ENCODE measurements at regions of chr2 and their contacts with region 1.

Region 1: GRCh38 chr2:16608661-16609643 is 56.7 kb downstream of the CYRIA start:
- DNase-seq: peak; percentile 60 to 99
- H3K4me3 ChIP-seq: peak overlapping the region; percentile 38 to 78 (median 66); a peak in 7 of 8 replicates
- H3K27ac ChIP-seq: no peak overlapping the region
- H3K4me1 ChIP-seq: no peaks in the 10 kb centered on the region; a peak in 1 of 7 replicates
- H3K27me3 ChIP-seq: no peaks in the 10 kb centered on the region
- CTCF ChIP-seq: peak; percentile 91 to 93 (median 91)
- EP300 ChIP-seq: no peak
- POLR2A ChIP-seq: no peak; a peak in 1 of 3 replicates
- RAD21 ChIP-seq: peak; percentile 93 to 95

Region 2: DNA sequence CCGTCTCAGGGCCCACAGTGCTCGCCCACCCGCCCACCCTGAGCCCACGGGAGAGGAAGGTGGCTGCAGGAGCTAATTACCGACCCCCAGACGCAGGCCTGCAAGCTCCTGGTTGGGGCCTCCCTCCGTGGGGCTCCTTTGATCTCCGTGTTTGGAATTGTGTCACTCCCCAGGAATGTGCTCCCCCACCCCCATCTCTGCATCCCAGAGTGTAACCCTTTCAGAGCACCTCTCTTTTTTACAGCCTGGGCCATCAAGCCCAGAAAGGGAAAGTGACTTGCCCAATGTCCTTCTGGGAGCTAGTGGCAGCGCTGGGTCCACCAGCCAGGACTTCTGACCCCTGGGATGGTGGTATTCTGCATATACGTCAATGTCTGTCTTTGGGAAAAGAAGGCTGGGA is 278.4 kb before region 1 on chr2:
- CTCF ChIA-PET with region 1: no interaction called
- POLR2A ChIA-PET with region 1: no interaction called
- DNase-seq: peak in 1 of 2 experiments; percentile 63
- H3K4me3 ChIP-seq: peak overlapping the region in 1 of 4 experiments; percentile 9; a peak in 2 of 8 replicates
- H3K27ac ChIP-seq: no peak overlapping the region
- H3K4me1 ChIP-seq: peaks cover 9 to 16% (median 13%) of the 10 kb centered on the region in 4 experiments
- H3K27me3 ChIP-seq: peaks cover 0 to 4% (median 1%) of the 10 kb centered on the region in 4 experiments; a peak in 1 of 7 replicates
- CTCF ChIP-seq: no peak
- EP300 ChIP-seq: no peak; a peak in 1 of 3 replicates
- POLR2A ChIP-seq: no peak
- RAD21 ChIP-seq: no peak

Region 3: DNA sequence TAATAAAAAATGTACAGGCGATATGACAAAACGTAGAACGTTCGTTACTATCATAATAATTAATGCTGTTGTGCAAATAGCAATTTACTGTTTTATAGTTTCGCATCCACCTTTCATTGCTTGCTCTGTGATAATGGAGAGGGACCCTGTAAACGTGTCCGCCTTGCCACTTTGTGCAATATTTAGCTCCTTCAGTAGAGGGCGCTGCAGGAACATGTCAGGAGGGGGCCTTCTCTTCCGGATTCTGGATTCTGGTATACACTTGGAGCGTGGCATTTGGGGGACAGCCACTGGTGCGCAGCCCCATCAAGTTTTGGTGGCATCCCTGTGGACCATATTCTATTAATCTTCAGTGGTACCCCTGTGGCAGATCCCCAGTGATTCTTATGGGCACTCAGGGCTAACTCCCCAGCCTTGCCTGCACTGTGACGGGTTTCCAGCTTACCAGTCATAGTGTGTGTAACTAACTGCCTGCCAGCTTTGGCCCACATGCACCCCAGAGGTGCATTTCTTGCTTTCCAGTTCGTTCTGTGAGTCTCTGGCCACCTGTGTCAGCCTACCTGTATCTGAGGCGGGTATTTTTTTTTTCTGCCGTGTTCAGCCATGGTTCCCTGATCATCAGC is 83.6 kb before region 1 on chr2:
- CTCF ChIA-PET with region 1: interaction called, 44 read pairs
- POLR2A ChIA-PET with region 1: no interaction called
- DNase-seq: peak in 1 of 2 experiments; percentile 89
- H3K4me3 ChIP-seq: no peak overlapping the region
- H3K27ac ChIP-seq: no peak overlapping the region
- H3K4me1 ChIP-seq: peaks cover 0 to 4% (median 0%) of the 10 kb centered on the region in 4 experiments; a peak in 2 of 7 replicates
- H3K27me3 ChIP-seq: no peaks in the 10 kb centered on the region
- CTCF ChIP-seq: peak; percentile 73 to 87 (median 86)
- EP300 ChIP-seq: no peak
- POLR2A ChIP-seq: no peak
- RAD21 ChIP-seq: peak; percentile 89 to 91

Region 4: DNA sequence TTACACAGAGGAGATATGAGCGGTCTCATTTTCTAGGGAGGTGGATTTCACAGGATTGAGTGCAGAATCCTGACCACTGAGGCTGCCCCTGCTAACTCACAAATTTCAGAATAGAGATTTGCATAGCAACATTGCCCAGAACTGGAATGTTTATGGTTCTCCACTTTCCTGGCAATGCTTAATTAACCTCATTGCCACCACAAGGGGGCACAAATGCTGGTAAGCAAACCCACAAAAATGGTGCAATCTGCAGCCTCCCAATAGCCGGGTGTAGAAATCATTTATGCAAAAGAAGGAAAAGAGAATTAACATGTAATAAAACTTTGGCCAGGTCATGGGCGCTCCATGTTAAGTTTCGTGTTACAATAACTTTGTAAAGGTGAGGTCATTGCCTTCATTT is 55.7 kb before region 1 on chr2:
- CTCF ChIA-PET with region 1: interaction called, 91 read pairs
- POLR2A ChIA-PET with region 1: no interaction called
- DNase-seq: peak in 1 of 2 experiments; percentile 51
- H3K4me3 ChIP-seq: no peak overlapping the region
- H3K27ac ChIP-seq: no peak overlapping the region
- H3K4me1 ChIP-seq: peaks cover 0 to 3% (median 0%) of the 10 kb centered on the region in 4 experiments; a peak in 1 of 7 replicates
- H3K27me3 ChIP-seq: no peaks in the 10 kb centered on the region
- CTCF ChIP-seq: peak; percentile 33 to 73 (median 67)
- EP300 ChIP-seq: no peak
- POLR2A ChIP-seq: no peak
- RAD21 ChIP-seq: peak; percentile 61 to 77

Region 5: GRCh38 chr2:16588565-16588964 is 20.4 kb before region 1 on chr2:
- CTCF ChIA-PET with region 1: interaction called, 19 read pairs
- POLR2A ChIA-PET with region 1: interaction called, 3 read pairs
- DNase-seq: no peak
- H3K4me3 ChIP-seq: peak overlapping the region in 1 of 4 experiments; percentile 22; a peak in 1 of 8 replicates
- H3K27ac ChIP-seq: no peak overlapping the region
- H3K4me1 ChIP-seq: peaks cover 2 to 5% (median 5%) of the 10 kb centered on the region in 4 experiments; a peak in 4 of 7 replicates
- H3K27me3 ChIP-seq: no peaks in the 10 kb centered on the region
- CTCF ChIP-seq: no peak
- EP300 ChIP-seq: no peak
- POLR2A ChIP-seq: no peak
- RAD21 ChIP-seq: no peak

Region 6: GRCh38 chr2:16727256-16727655 is 118.3 kb after region 1 on chr2:
- CTCF ChIA-PET with region 1: interaction called, 10 read pairs
- POLR2A ChIA-PET with region 1: no interaction called
- DNase-seq: no peak
- H3K4me3 ChIP-seq: no peak overlapping the region
- H3K27ac ChIP-seq: no peak overlapping the region
- H3K4me1 ChIP-seq: peaks cover 0 to 3% (median 0%) of the 10 kb centered on the region in 4 experiments; a peak in 1 of 7 replicates
- H3K27me3 ChIP-seq: no peaks in the 10 kb centered on the region
- CTCF ChIP-seq: no peak; a peak in 1 of 4 replicates
- EP300 ChIP-seq: no peak
- POLR2A ChIP-seq: no peak
- RAD21 ChIP-seq: peak; percentile 30 to 46

Region 7: DNA sequence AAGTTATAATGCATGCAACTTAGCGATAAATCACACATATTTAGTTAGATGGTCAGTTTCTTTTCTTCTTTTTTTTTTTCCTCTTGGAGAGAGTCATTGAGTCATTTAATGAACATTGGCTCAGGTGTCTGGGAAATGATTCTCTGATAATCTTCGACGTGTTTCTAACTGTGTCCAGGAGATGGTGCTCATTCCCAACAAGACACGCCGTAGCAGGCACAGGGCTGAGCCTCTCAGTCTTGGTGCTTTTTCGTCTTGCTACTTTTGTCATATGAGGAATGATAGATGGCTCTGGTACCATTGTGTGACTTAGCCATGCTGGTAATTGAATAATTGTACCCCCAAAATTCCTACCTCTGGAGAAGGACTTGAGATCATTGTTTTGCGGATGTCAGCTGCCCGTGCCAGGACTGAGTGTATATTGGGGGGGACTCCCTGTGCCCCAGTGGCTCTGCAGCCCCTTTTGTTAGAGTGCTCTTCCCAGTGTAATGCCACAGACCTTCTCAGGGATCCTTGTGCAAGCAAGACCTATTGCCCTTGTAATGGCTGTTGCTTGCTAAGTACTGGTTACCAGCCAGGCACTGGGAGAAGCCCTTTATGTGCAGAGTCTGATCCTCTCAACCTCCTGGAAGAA is 164.2 kb after region 1 on chr2:
- CTCF ChIA-PET with region 1: interaction called, 14 read pairs
- POLR2A ChIA-PET with region 1: no interaction called
- DNase-seq: peak in 1 of 2 experiments; percentile 62
- H3K4me3 ChIP-seq: no peak overlapping the region
- H3K27ac ChIP-seq: no peak overlapping the region
- H3K4me1 ChIP-seq: peaks cover 0 to 12% (median 3%) of the 10 kb centered on the region in 4 experiments; a peak in 2 of 7 replicates
- H3K27me3 ChIP-seq: no peaks in the 10 kb centered on the region
- CTCF ChIP-seq: peak; percentile 53 to 79 (median 72)
- EP300 ChIP-seq: no peak
- POLR2A ChIP-seq: no peak
- RAD21 ChIP-seq: peak; percentile 96 to 98

Measured in H1 (cell line).